Activated CD4-positive, alpha-beta T cell treated with anti-CD3 and anti-CD28 coated beads, Interleukin-2, amount 10 ng/mL, durations not matched to agents 24 days and 14 days (primary cell): ENCODE measurements at regions of chr3 and their contacts with region 1.

Region 1: GRCh38 chr3:12135029-12135657 is 23.6 kb downstream of the TIMP4 start:
- DNase-seq: peak; percentile 88
- H3K4me3 Mint-ChIP-seq: no peak overlapping the region
- H3K27ac Mint-ChIP-seq: no peak overlapping the region
- H3K4me1 Mint-ChIP-seq: peaks cover 4% of the 10 kb centered on the region
- H3K27me3 Mint-ChIP-seq: peaks cover 21% of the 10 kb centered on the region

Region 2: DNA sequence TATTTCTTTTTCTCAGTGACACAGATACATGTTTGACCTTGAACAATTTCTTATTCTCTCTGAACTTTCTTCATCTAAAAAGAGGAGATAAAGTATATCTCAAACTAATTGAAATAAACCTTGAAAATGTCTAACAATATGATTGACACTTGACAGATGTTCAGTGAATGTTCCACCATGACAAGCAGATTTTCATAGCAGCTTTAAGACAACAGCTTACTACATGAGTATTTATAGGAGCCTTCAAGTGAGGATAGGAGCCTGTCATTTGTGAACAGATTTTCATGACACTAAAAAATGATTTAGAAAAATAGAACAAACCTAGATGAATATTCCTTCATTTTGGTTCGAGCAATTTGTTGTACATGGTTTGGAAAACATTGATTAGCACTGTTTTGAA is 117.6 kb before region 1 on chr3:
- intact Hi-C with region 1: no loop called
- DNase-seq: no peak
- H3K4me3 Mint-ChIP-seq: no peak overlapping the region
- H3K27ac Mint-ChIP-seq: no peak overlapping the region
- H3K4me1 Mint-ChIP-seq: no peaks in the 10 kb centered on the region
- H3K27me3 Mint-ChIP-seq: no peaks in the 10 kb centered on the region

Region 3: GRCh38 chr3:12175844-12176453 is 40.8 kb after region 1 on chr3:
- intact Hi-C with region 1: loop called (anchors 1 kb)
- DNase-seq: peak; percentile 72
- H3K4me3 Mint-ChIP-seq: no peak overlapping the region
- H3K27ac Mint-ChIP-seq: no peak overlapping the region
- H3K4me1 Mint-ChIP-seq: peaks cover 15% of the 10 kb centered on the region
- H3K27me3 Mint-ChIP-seq: no peaks in the 10 kb centered on the region

Region 4: DNA sequence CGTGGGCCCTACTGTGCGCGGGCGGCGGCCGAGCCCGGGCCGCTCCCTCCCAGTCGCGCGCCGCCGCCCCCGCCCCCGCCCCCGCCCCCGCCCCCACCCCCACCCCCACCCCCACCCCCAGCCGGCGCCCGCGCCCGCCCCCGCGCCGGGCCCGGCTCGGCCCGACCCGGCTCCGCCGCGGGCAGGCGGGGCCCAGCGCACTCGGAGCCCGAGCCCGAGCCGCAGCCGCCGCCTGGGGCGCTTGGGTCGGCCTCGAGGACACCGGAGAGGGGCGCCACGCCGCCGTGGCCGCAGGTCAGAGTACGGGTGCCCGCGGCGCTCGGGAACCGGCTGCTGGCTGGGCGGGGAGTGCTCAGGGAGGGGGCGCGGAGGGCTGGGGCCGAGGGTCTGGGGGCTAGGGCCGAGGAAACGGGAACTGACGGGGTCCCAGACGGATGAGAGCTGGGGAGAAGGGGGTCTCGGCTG is 152.6 kb after region 1 on chr3:
- intact Hi-C with region 1: loop called (anchors 5 kb)
- DNase-seq: no peak
- H3K4me3 Mint-ChIP-seq: peak overlapping the region; percentile 72
- H3K27ac Mint-ChIP-seq: no peak overlapping the region
- H3K4me1 Mint-ChIP-seq: peaks cover 3% of the 10 kb centered on the region
- H3K27me3 Mint-ChIP-seq: peaks cover 66% of the 10 kb centered on the region

Region 5: DNA sequence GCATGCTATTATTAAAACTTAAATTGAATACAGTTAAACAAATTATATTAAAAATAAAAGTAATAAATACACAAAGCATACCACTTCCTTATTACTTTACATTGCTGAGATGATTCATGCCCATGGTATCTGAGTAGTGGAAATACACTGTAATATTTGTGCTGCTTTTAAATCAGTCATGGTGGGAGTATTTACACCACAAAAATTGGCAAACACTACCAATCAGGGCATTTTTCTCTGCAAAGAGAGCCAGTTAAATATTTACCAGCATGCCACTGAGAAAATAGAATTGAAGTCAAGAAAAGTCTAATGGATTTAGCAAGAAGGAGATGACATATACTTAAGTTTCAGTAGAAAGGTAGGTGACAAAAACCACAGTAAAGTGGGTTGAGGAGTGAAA is 173.4 kb after region 1 on chr3:
- intact Hi-C with region 1: no loop called
- DNase-seq: no peak
- H3K4me3 Mint-ChIP-seq: no peak overlapping the region
- H3K27ac Mint-ChIP-seq: peak overlapping the region; percentile 6
- H3K4me1 Mint-ChIP-seq: peaks cover 17% of the 10 kb centered on the region
- H3K27me3 Mint-ChIP-seq: peaks cover 26% of the 10 kb centered on the region

Region 6: GRCh38 chr3:12349895-12350813 is 215.0 kb after region 1 on chr3:
- intact Hi-C with region 1: loop called (anchors 5 kb)
- DNase-seq: no peak
- H3K4me3 Mint-ChIP-seq: no peak overlapping the region
- H3K27ac Mint-ChIP-seq: no peak overlapping the region
- H3K4me1 Mint-ChIP-seq: peaks cover 5% of the 10 kb centered on the region
- H3K27me3 Mint-ChIP-seq: peaks cover 25% of the 10 kb centered on the region

Region 7: DNA sequence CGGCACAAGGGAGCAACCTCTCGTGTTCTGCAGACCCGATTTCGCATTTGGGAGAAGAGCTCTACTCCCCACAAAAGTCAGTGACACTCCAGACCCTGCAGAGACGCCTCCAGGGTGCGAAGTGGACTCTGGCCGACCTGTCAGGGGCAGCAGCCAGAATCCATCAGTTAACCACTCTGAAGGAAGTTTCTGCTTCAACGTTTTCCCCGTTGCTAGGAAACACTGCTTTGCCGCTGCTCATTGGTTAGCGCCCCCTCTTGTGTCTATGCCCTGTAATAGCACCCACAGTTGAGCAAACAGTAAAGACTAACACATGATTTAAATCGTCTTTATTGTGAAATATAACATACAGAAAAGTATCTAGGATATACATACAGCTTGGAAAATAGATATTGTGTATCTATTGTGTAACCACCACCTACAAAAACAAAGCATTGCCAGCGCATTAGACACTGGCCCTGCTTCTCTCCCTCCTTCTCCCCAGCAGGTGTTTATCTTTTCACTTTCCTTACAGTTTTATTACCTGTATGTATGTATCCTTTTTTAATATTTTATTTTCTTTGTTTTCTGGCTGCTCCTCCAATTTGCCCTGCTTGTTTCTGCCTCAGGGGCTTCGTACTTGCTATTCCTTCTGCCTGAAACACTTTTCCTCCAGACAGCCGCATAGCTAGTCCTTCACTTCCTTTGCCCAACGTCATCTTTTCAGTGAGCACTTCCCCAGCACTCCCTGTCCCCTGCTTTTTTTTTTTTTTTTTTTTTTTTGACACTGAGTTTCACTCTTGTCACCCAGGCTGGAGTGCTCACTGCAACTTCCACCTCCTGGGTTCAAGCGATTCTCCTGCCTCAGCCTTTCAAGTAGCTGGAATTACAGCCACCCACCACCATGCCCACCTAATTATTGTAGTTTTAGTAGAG is 585.1 kb after region 1 on chr3:
- intact Hi-C with region 1: loop called (anchors 5 kb)
- DNase-seq: peak; percentile 92
- H3K4me3 Mint-ChIP-seq: peak overlapping the region; percentile 60
- H3K27ac Mint-ChIP-seq: no peak overlapping the region
- H3K4me1 Mint-ChIP-seq: peaks cover 5% of the 10 kb centered on the region
- H3K27me3 Mint-ChIP-seq: no peaks in the 10 kb centered on the region